ENCODE measurements at regions of chrX and their contacts with region 1.

Region 1: DNA sequence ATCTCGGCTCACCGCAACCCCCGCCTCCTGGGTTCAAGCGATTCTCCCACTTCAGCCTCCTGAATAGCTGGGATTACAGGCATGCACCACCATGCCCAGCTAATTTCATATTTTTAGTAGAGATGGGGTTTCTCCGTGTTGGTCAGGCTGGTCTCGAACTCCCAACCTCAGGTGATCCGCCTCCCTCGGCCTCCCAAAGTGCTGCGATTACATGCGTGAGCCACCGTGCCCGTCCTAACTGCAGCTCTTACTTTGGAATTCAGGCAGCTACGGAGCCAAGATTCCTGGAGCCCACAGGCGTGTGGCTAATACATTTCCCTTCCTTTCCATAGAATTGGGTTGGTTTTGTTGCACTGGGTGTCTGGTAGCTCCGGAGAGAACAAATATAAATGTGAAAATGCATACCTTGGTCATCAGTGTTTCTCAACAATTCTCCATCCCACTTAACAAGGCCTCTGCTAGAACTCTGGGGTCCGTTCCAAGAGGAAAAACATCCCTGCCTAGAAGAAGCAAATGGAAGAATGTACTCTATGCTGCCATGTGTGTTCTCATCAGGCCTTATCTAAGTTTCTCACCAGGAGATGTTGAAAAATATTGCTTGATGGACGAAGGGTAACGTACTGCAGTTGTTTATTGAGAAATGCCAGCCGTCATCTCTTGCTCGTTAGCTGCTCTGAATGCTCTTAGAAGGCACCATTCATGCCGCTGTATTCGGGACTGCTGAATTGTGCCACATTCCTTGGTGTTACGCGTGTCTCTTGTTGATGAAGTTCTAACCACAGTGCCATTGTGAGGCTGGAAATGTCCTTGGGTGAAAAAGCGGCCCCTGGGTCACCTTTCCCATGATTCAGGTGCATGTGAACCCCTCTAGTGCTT is 50.6 kb upstream of the CD99 start:
- DNase-seq: no peak
- H3K4me3 Mint-ChIP-seq: no peak overlapping the region
- H3K27ac Mint-ChIP-seq: no peak overlapping the region
- H3K4me1 Mint-ChIP-seq: no peaks in the 10 kb centered on the region
- H3K27me3 Mint-ChIP-seq: no peaks in the 10 kb centered on the region

Region 2: GRCh38 chrX:2371026-2371711 is 269.3 kb before region 1 on chrX:
- CTCF ChIA-PET with region 1: no interaction called
- intact Hi-C with region 1: no loop called
- DNase-seq: no peak
- H3K4me3 Mint-ChIP-seq: no peak overlapping the region
- H3K27ac Mint-ChIP-seq: no peak overlapping the region
- H3K4me1 Mint-ChIP-seq: peaks cover 4% of the 10 kb centered on the region
- H3K27me3 Mint-ChIP-seq: no peaks in the 10 kb centered on the region

Region 3: DNA sequence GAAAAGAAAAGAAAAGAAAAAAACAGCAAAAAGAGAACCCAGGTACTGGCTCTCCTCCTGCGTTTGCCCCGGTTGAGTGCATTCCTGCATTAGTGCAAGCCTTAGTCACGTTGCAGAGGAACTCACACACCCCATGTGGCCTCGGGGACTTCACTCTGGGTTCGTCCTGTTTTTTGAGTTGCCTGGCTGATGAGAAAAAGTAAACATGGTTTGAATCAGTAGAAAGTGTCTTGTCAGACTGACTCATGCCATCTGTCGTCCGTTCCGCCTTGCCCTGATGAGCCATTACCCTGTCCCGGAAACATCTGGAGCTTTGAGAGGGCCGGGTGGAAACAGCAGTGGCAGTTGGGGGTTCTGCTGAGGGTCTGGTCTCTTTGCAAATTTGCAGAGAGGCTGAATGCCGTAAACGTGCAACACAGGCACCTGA is 66.8 kb after region 1 on chrX:
- CTCF ChIA-PET with region 1: no interaction called
- intact Hi-C with region 1: loop called (anchors 1 kb)
- DNase-seq: peak; percentile 90
- H3K4me3 Mint-ChIP-seq: peak overlapping the region; percentile 28
- H3K27ac Mint-ChIP-seq: peak overlapping the region; percentile 99
- H3K4me1 Mint-ChIP-seq: peaks cover 92% of the 10 kb centered on the region
- H3K27me3 Mint-ChIP-seq: no peaks in the 10 kb centered on the region

Region 4: GRCh38 chrX:2719774-2720447 is 79.4 kb after region 1 on chrX:
- CTCF ChIA-PET with region 1: no interaction called
- intact Hi-C with region 1: no loop called
- DNase-seq: no peak
- H3K4me3 Mint-ChIP-seq: no peak overlapping the region
- H3K27ac Mint-ChIP-seq: no peak overlapping the region
- H3K4me1 Mint-ChIP-seq: peaks cover 35% of the 10 kb centered on the region
- H3K27me3 Mint-ChIP-seq: no peaks in the 10 kb centered on the region

Region 5: DNA sequence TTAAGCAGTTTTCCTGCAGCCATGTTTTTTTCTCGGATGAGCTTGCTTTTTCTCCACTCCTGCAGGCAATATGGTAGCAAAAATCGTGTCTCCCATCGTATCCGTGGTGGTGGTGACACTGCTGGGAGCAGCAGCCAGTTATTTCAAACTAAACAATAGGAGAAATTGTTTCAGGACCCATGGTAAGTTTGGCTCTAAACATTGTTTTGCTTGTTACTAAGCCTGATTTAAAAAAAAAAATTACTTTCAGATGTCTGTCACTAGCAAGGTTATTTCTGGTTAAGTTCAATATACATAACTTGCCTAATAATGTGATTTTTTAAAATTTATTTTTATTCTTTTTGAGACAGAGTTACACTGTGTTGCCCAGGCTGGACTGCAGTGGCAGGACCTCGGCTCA is 170.8 kb after region 1 on chrX:
- CTCF ChIA-PET with region 1: no interaction called
- intact Hi-C with region 1: loop called (anchors 1 kb)
- DNase-seq: no peak
- H3K4me3 Mint-ChIP-seq: no peak overlapping the region
- H3K27ac Mint-ChIP-seq: no peak overlapping the region
- H3K4me1 Mint-ChIP-seq: peaks cover 3% of the 10 kb centered on the region
- H3K27me3 Mint-ChIP-seq: no peaks in the 10 kb centered on the region

Region 6: DNA sequence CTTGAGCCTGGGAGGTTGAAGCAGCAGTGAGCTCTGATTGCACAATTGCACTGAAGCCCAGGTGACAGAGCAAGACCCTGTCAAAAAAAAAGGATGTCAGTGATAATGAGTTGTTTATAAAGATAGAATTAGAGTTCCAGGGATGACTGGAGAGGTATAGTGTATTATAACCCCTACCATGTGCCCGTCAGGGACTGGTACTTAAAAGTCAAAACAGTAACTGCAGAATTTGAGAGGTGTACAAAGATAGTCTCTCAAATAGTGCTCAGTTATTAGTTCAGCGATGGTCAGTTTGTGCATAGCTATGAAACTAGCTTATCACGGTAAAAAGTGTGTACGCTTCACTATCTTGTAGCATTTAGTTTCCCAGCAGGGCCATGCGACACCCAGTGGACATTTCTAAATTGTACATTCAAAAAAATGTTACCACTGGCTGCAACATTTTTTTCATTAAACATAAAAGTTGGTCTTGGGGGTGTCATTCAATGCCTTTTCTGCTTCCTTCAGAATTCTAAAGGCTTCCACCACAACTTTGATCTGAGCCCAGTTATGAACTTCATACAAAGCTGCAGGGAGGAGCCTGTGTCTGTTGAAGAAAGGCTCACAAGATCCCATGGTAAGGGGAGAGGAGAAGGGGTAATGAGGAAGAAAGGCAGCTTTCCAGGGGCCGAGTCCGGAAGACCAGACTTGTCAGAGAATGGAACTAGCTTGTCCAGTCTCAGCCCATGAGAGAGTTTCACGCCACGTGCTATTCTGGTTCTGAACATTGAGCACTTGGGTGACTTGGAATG is 179.0 kb after region 1 on chrX:
- CTCF ChIA-PET with region 1: no interaction called
- intact Hi-C with region 1: loop called (anchors 1 kb)
- DNase-seq: no peak
- H3K4me3 Mint-ChIP-seq: no peak overlapping the region
- H3K27ac Mint-ChIP-seq: no peak overlapping the region
- H3K4me1 Mint-ChIP-seq: no peaks in the 10 kb centered on the region
- H3K27me3 Mint-ChIP-seq: peaks cover 2% of the 10 kb centered on the region

Region 7: GRCh38 chrX:3037218-3037617 is 396.7 kb after region 1 on chrX:
- CTCF ChIA-PET with region 1: no interaction called
- intact Hi-C with region 1: loop called (anchors 10 kb)
- DNase-seq: no peak
- H3K4me3 Mint-ChIP-seq: no peak overlapping the region
- H3K27ac Mint-ChIP-seq: no peak overlapping the region
- H3K4me1 Mint-ChIP-seq: no peaks in the 10 kb centered on the region
- H3K27me3 Mint-ChIP-seq: peaks cover 3% of the 10 kb centered on the region

Measured in activated naive CD4-positive, alpha-beta T cell treated with anti-CD3 and anti-CD28 coated beads for 36 hours (primary cell).